Activated T-helper 1 cell treated with anti-CD3 and anti-CD28 coated beads, Interleukin-12 subunit alpha, Interleukin-12 subunit beta, Interleukin-2, Interleukin-4 antibody, amounts not matched to agents 30 ng/mL and 10 ng/mL and 1 ng/mL, durations not matched to agents 14 hours and 24 hours and 36 hours (primary cell): ENCODE measurements at regions of chr14 and their contacts with region 1.

Region 1: DNA sequence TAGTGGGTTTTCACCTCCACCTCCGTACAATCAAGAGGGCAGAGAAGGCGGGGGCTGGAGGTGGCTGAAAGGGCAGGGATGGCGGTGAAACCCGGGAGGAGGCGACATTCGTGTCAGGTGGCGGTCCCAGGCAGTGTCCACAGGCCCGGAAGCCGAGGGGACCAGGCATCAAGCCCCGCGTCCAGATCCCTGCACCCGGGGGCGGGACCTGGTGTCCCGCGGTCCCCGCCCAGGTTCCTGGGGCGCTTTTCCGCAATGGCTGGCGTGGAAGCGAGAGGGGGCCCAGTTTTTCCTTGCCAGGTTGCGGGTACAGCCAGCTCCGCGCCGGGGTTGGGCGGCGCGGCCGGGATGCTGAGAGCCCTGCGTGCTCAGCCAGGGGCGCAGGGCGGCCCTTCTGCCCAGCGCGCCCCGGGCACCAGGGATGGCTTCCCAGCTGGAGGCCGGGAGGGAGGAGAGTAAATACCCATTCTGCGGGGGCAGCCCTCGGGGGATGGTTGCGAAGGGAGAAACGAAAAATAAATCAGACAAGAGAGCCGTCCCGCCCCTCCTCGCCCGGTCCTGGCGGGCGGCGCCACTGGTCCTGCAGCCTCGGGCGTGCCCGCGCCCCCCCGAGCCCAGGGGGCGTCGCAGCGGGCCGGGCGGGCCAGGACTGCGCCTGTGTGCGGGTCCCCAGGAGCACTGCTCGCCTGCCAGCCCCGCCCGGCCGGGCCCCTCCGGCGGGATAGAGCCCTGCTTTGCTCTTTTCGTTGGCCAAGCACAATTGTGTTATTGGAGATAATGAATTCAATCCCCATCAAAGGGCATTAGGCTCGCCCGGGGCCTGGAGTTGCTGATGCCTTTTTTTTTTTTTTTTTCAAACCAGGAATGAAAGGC is 11.5 kb downstream of the FOXA1 start:
- DNase-seq: no peak
- H3K4me3 Mint-ChIP-seq: no peak overlapping the region
- H3K27ac Mint-ChIP-seq: no peak overlapping the region
- H3K4me1 Mint-ChIP-seq: no peaks in the 10 kb centered on the region
- H3K27me3 Mint-ChIP-seq: peaks cover 29% of the 10 kb centered on the region

Region 2: DNA sequence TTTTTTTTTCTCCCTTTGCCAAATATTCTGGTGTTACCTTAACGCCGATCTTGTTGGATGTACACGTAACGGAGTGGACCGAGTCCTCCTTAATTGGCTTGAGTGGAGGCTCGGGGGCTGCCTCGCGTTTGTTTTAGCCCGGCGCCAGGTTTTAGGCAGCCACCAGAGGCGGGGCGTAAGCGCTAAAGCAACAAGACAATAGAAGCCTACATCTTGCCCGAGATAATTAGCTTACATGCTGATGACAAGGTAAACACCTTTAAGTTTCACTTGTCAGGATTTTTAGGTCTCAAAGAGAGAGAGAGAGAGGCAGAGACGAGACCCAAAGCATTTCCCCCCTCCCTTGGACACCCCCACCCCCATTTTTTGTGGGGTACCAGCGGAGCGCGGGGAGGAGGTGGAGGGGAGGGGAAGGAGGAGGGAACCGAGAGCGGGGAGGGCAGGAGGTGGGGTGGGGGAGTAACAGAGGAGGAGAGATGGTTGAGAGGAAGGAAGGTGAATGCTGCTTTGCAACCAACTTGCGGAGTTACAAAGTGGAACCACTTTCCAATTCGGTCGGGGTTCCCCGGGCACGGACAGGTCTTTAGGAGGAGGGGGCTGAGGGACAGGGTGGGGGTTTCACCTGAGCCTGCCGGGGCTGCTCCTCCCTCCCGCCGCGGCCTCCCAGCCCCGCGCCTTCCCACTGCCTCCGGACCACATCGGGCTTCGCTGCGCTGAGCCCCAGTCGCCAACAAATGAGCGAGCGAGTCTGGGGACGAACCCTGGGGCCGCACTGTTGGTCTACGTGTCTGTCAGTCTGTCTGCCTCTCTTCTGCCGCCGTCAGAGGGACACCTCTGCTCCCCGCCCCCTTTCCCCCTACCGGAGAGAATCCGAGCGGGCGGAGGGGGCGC is 1063.9 kb before region 1 on chr14 and contains the start of gene NKX2-1:
- intact Hi-C with region 1: loop called (anchors 5 kb)
- DNase-seq: no peak
- H3K4me3 Mint-ChIP-seq: peak within 1 kb of the TSS; percentile 37
- H3K27ac Mint-ChIP-seq: peak within 1 kb of the TSS; percentile 70
- H3K4me1 Mint-ChIP-seq: no peaks in the 10 kb centered on the region
- H3K27me3 Mint-ChIP-seq: peaks cover 65% of the 10 kb centered on the region
- total RNA-seq, gene NKX2-1: not detected in 2 replicates

Region 3: DNA sequence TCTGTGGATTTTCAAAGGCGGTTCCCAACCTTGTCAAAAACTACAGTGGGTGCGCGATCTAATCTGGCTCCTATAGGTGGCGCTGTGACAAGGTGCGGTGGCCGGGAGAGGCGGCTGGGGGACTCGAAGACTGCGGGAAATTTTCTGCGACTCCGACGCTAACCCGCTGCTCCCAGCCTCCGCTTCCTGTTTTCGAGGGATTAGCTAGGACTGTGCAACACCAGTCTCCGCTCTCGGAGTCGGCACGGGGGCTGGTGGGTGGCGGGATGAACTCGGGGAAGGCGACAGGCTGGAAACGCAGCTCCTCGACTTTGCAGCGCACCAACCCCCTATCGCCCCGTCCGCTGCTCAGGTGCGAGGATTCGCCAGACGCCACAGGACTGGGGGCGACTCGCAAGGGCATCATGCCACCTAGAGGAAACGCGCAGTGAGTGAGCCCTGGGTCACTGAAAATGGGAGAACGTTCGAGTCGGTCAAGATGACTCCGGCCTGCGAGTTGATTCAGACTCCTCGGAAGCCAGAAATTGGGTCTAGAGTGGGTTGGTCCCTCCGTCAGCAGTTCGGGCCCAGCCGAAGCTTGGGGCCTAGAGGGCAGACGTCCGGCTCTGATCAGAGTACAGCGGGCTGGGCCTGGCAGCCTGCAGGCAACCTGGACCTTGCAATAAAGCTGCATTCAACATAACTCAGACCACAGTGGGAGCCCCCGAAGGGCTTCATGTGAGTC is 927.5 kb before region 1 on chr14:
- intact Hi-C with region 1: loop called (anchors 2 kb)
- DNase-seq: no peak
- H3K4me3 Mint-ChIP-seq: no peak overlapping the region
- H3K27ac Mint-ChIP-seq: no peak overlapping the region
- H3K4me1 Mint-ChIP-seq: peaks cover 5% of the 10 kb centered on the region
- H3K27me3 Mint-ChIP-seq: peaks cover 77% of the 10 kb centered on the region

Region 4: GRCh38 chr14:36773136-36773540 is 810.5 kb before region 1 on chr14:
- intact Hi-C with region 1: no loop called
- DNase-seq: no peak
- H3K4me3 Mint-ChIP-seq: no peak overlapping the region
- H3K27ac Mint-ChIP-seq: no peak overlapping the region
- H3K4me1 Mint-ChIP-seq: no peaks in the 10 kb centered on the region
- H3K27me3 Mint-ChIP-seq: no peaks in the 10 kb centered on the region

Region 5: DNA sequence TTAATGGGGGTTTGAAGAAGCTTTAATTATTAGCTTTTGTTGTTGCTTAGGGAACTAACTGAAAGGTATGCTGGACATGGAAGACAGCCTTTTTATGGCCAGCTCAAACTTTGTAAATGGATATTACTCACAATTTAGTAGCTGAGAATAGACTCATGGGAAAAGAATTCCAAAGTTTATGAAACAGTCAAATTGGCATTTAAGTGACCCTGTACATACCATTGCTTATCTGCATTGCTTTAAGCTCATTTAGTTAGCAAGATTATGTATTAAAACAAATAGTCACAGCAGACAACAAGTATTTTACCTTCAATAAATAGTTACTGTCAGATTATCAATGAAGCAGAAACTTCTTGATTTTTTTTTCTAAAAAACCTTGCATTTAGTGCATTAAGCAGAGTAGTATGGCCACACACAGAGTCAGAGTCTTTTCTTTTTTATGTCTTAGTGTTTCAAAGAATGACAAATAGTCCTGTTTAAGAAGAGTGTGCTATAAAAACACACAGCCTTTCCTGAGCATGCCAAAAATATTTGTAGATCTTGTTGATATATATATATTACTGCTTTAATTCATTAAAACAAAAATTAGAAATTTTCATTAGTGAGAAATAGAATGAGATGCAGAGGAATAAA is 114.0 kb after region 1 on chr14:
- intact Hi-C with region 1: no loop called
- DNase-seq: no peak
- H3K4me3 Mint-ChIP-seq: no peak overlapping the region
- H3K27ac Mint-ChIP-seq: no peak overlapping the region
- H3K4me1 Mint-ChIP-seq: no peaks in the 10 kb centered on the region
- H3K27me3 Mint-ChIP-seq: no peaks in the 10 kb centered on the region

Region 6: DNA sequence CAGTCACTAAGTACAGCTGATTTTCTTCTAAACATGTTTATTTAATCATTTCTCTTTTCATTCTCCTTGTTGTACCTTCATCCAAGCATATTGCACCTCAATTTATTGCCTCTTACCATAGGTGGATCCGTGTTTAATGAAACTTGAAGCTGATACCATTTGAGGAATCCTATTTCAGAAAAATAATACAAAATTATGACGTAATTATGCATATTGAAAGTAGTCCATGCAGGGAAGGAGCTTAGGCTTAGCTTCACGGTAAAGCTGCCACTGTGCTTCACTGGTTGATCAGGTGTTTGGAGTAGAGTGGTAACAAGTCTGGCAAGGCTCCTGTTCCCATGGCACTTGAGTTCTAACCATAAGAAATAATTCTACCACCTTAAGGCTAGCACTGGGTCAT is 733.3 kb after region 1 on chr14:
- intact Hi-C with region 1: no loop called
- DNase-seq: no peak
- H3K4me3 Mint-ChIP-seq: no peak overlapping the region
- H3K27ac Mint-ChIP-seq: no peak overlapping the region
- H3K4me1 Mint-ChIP-seq: no peaks in the 10 kb centered on the region
- H3K27me3 Mint-ChIP-seq: peaks cover 3% of the 10 kb centered on the region